ENCODE measurements at regions of chr2 and their contacts with region 1.

Region 1: GRCh38 chr2:239275044-239275685 is 125.7 kb downstream of the HDAC4 start:
- DNase-seq: peak; percentile 55 to 88 (median 78)
- ATAC-seq: peak; percentile 94
- H3K4me3 ChIP-seq: peak overlapping the region; percentile 35
- H3K4me3 Mint-ChIP-seq: peak overlapping the region; percentile 72 to 88 (median 80)
- H3K27ac ChIP-seq: peak overlapping the region; percentile 19
- H3K27ac Mint-ChIP-seq: peak overlapping the region; percentile 67 to 97 (median 87)
- H3K4me1 ChIP-seq: peaks cover 17 to 32% of the 10 kb centered on the region in 2 donors
- H3K4me1 Mint-ChIP-seq: peaks cover 53 to 84% (median 78%) of the 10 kb centered on the region in 7 donors
- H3K27me3 ChIP-seq: no peaks in the 10 kb centered on the region
- H3K27me3 Mint-ChIP-seq: peaks cover 0 to 4% (median 0%) of the 10 kb centered on the region in 5 donors

Region 2: DNA sequence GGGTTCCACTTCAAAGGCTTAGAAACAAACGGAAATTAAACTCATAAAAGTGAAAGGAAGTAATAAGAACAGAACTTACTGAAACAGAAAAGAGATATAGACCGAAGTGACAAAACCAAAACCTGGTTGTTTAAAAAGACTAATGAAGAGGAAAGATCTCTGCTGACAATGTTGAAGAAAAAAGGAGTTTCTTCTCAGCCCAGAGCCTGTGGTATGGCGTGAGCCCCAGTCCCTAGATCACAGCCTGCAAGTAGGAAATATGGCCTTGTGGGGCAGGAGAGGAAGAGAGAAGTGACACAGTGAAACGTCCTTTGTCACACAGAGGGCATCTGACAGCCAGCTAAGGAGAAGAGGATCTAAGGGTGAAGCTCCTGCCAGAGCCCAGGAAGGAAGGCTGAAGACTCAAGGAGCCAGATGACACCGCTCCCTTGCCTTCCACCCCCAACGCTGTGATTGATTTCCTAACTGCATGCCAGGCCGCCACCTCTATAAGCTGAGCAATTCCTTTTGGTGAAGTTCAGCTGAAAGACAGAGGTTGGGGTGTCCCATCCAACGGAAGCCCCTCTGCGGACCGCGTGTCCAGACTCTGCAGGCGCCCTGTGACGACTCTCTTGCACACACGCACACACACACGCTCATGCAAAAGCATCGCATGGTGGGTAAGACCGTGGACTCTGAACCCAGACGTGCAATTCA is 15.4 kb before region 1 on chr2:
- CTCF ChIA-PET with region 1: no interaction called
- POLR2A ChIA-PET with region 1: interaction called, 11 read pairs
- intact Hi-C with region 1: no loop called
- DNase-seq: peak in 5 of 9 donors; percentile 18 to 39 (median 36)
- ATAC-seq: peak; percentile 71
- H3K4me3 ChIP-seq: peak overlapping the region; percentile 31
- H3K4me3 Mint-ChIP-seq: peak overlapping the region; percentile 75 to 93 (median 83)
- H3K27ac ChIP-seq: peak overlapping the region; percentile 68
- H3K27ac Mint-ChIP-seq: peak overlapping the region; percentile 83 to 96 (median 93)
- H3K4me1 ChIP-seq: peaks cover 46 to 89% of the 10 kb centered on the region in 2 donors
- H3K4me1 Mint-ChIP-seq: peaks cover 57 to 97% (median 88%) of the 10 kb centered on the region in 7 donors
- H3K27me3 ChIP-seq: no peaks in the 10 kb centered on the region
- H3K27me3 Mint-ChIP-seq: no peaks in the 10 kb centered on the region

Region 3: DNA sequence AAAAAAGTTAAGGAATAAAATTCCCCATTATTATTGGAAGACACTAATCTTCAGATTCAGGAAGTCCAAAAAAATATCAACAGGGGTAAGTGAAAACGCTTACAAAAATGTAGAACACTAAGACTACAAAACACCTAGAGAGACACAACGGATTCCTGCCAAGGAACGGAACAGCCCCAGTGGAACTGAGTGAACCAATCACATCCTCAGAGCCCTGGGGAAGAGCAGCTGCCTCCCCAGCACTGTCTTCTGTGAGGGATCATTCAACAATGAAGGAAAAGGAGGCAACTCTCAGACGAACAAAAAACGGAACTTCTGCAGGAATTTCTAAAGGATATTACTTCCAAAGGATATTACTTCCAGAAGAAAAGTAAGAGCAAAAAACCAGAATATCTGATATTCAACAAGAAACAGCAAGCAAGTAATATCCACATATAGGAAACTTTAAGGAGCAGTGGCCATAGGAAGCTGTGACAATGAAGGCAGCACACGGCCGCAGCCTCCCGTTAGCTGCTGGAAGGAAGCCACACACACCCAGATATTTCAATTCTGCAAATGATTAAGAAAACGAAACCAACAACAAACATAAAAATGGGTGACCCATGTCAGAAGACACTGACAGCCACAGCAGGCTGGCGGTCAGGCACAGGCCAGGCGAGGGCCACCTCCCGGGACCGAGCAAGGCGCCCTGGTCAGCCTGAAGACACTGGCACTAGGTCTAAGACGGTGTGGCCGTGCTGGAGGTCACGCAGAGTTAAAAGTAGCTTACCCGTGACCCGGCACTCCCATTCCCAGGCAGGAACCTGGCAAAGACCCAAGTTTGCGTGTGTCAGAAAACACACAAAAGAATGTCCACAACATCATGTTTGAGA is 43.9 kb after region 1 on chr2:
- CTCF ChIA-PET with region 1: no interaction called
- POLR2A ChIA-PET with region 1: interaction called, 4 read pairs
- intact Hi-C with region 1: loop called in 1 of 2 experiments (anchors 1 kb)
- DNase-seq: peak in 4 of 9 donors; percentile 6 to 31 (median 28)
- ATAC-seq: peak; percentile 5
- H3K4me3 ChIP-seq: no peak overlapping the region
- H3K4me3 Mint-ChIP-seq: peak overlapping the region; percentile 78 to 90 (median 88)
- H3K27ac ChIP-seq: peak overlapping the region; percentile 64
- H3K27ac Mint-ChIP-seq: peak overlapping the region; percentile 93 to 100 (median 98)
- H3K4me1 ChIP-seq: peaks cover 31 to 41% of the 10 kb centered on the region in 2 donors
- H3K4me1 Mint-ChIP-seq: peaks cover 34 to 91% (median 78%) of the 10 kb centered on the region in 7 donors
- H3K27me3 ChIP-seq: no peaks in the 10 kb centered on the region
- H3K27me3 Mint-ChIP-seq: no peaks in the 10 kb centered on the region

Region 4: DNA sequence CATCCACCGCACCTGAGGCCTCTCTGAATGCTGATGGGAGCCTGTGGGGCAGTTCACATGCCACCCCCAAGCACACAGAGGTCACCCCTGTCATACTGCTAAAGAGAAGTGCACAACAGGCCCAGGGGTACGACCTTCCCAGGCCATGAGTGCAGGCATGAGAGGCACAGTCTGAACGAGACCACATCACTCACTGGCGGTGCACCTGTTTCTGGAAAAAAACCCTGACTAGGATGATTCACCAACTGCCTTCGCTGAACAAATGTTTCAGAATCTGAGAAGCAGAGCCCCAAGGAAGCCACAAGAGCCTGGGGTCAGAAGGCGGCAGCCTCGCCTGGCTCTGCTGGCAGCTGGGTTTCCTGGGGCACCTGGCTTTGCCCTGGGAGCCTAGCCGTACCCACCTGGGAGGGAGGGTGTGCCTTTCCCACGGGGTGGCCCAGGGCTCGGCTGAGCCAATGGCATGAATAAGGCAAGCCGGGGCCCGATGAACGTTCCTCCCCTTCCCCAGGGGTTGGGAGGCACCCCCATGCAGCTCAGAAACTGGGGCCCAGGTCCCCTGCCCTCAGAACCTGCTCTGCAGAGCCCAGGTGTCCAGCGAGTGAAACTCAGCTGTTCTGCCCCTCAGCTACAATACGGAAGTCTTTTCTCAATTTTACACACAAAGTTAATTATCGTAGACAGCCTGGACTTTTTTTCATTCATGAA is 51.8 kb after region 1 on chr2:
- CTCF ChIA-PET with region 1: no interaction called
- POLR2A ChIA-PET with region 1: interaction called, 4 read pairs
- intact Hi-C with region 1: loop called (anchors 1 to 2 kb)
- DNase-seq: peak in 8 of 9 donors; percentile 54 to 81 (median 72)
- ATAC-seq: peak; percentile 83
- H3K4me3 ChIP-seq: no peak overlapping the region
- H3K4me3 Mint-ChIP-seq: peak overlapping the region; percentile 55 to 79 (median 71)
- H3K27ac ChIP-seq: peak overlapping the region; percentile 68
- H3K27ac Mint-ChIP-seq: peak overlapping the region; percentile 89 to 100 (median 95)
- H3K4me1 ChIP-seq: peaks cover 20 to 65% of the 10 kb centered on the region in 2 donors
- H3K4me1 Mint-ChIP-seq: peaks cover 54 to 99% (median 89%) of the 10 kb centered on the region in 7 donors
- H3K27me3 ChIP-seq: no peaks in the 10 kb centered on the region
- H3K27me3 Mint-ChIP-seq: no peaks in the 10 kb centered on the region

Region 5: DNA sequence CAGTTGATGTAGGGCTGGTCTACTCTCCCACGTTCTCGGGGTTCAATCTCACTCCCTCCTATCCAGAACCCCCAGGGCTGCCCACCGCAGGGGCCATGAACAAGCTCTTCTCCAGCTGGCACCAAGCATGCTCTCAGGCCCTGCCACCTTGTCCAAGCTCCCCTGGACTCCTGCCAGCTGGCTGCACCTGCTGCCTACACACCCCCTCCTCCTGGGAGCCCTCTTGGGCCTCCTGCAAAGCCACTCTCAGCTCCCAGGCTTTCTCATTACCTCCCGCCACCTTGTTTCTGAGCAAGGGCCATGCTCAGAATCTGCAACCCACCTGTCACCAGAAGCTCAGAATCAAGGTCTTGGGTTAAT is 69.7 kb after region 1 on chr2:
- CTCF ChIA-PET with region 1: no interaction called
- POLR2A ChIA-PET with region 1: no interaction called
- intact Hi-C with region 1: no loop called
- DNase-seq: no peak
- ATAC-seq: no peak
- H3K4me3 ChIP-seq: no peak overlapping the region
- H3K4me3 Mint-ChIP-seq: no peak overlapping the region
- H3K27ac ChIP-seq: no peak overlapping the region
- H3K27ac Mint-ChIP-seq: peak overlapping the region in 1 of 9 donors; percentile 22
- H3K4me1 ChIP-seq: peaks cover 4 to 14% of the 10 kb centered on the region in 2 donors
- H3K4me1 Mint-ChIP-seq: peaks cover 14 to 27% (median 21%) of the 10 kb centered on the region in 7 donors
- H3K27me3 ChIP-seq: no peaks in the 10 kb centered on the region
- H3K27me3 Mint-ChIP-seq: no peaks in the 10 kb centered on the region

Measured in naive thymus-derived CD4-positive, alpha-beta T cell (primary cell).